SK-N-SH (cell line): ENCODE measurements at regions of chr22 and their contacts with region 1.

Region 1: GRCh38 chr22:17171313-17172171 is 12.5 kb upstream of the HDHD5 start:
- DNase-seq: peak; percentile 96
- H3K4me3 ChIP-seq: peak overlapping the region; percentile 59 to 99
- H3K27ac ChIP-seq: peak overlapping the region; percentile 72 to 82
- H3K4me1 ChIP-seq: peaks cover 0 to 3% of the 10 kb centered on the region in 2 experiments; a peak in 1 of 4 replicates
- H3K27me3 ChIP-seq: no peaks in the 10 kb centered on the region
- CTCF ChIP-seq: peak; percentile 90
- EP300 ChIP-seq: no peak
- RAD21 ChIP-seq: peak; percentile 55

Region 2: DNA sequence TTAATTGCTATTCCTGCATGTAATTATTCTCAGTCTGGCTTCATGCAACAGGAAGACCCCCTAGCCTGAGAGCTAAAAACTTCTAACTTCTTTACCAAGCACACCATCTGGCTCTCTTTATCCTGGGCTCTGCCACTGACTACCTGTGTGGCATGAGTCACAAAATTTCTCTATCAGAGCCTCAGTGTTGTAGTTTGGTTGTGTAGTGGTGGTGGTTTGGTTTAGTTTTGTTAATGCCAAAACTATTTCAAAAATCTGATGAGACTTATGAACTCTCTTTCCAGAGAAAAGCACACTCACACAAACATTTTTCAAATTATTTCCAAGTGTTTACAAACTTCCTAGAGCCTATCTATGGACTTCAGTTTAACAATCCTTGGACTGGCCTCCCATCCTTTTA is 94.3 kb before region 1 on chr22:
- CTCF ChIA-PET with region 1: interaction called, 44 read pairs
- POLR2A ChIA-PET with region 1: interaction called, 3 read pairs
- DNase-seq: no peak
- H3K4me3 ChIP-seq: no peak overlapping the region
- H3K27ac ChIP-seq: peak overlapping the region in 1 of 2 experiments; percentile 45; a peak in 1 of 4 replicates
- H3K4me1 ChIP-seq: no peaks in the 10 kb centered on the region
- H3K27me3 ChIP-seq: peaks cover 5% of the 10 kb centered on the region
- CTCF ChIP-seq: no peak
- EP300 ChIP-seq: peak in 1 of 2 experiments; percentile 20; a peak in 1 of 4 replicates
- RAD21 ChIP-seq: no peak

Region 3: GRCh38 chr22:17112486-17113042 is 59.0 kb before region 1 on chr22:
- CTCF ChIA-PET with region 1: interaction called, 15 read pairs
- POLR2A ChIA-PET with region 1: no interaction called
- DNase-seq: no peak
- H3K4me3 ChIP-seq: no peak overlapping the region
- H3K27ac ChIP-seq: no peak overlapping the region
- H3K4me1 ChIP-seq: no peaks in the 10 kb centered on the region
- H3K27me3 ChIP-seq: no peaks in the 10 kb centered on the region
- CTCF ChIP-seq: no peak
- EP300 ChIP-seq: no peak
- RAD21 ChIP-seq: no peak

Region 4: GRCh38 chr22:17143826-17144225 is 27.7 kb before region 1 on chr22:
- CTCF ChIA-PET with region 1: interaction called, 21 read pairs
- POLR2A ChIA-PET with region 1: no interaction called
- DNase-seq: no peak
- H3K4me3 ChIP-seq: no peak overlapping the region
- H3K27ac ChIP-seq: no peak overlapping the region
- H3K4me1 ChIP-seq: no peaks in the 10 kb centered on the region; a peak in 1 of 4 replicates
- H3K27me3 ChIP-seq: no peaks in the 10 kb centered on the region
- CTCF ChIP-seq: no peak
- EP300 ChIP-seq: no peak
- RAD21 ChIP-seq: no peak

Region 5: GRCh38 chr22:17199003-17199731 is 27.6 kb after region 1 on chr22:
- CTCF ChIA-PET with region 1: interaction called, 68 read pairs
- POLR2A ChIA-PET with region 1: no interaction called
- DNase-seq: peak; percentile 77
- H3K4me3 ChIP-seq: 0 out of 4 replicates have a peak overlapping the region, but pooled peaks of 1 of the 2 experiments have one; percentile 23
- H3K27ac ChIP-seq: no peak overlapping the region
- H3K4me1 ChIP-seq: peaks cover 0 to 5% of the 10 kb centered on the region in 2 experiments; a peak in 1 of 4 replicates
- H3K27me3 ChIP-seq: peaks cover 23% of the 10 kb centered on the region
- CTCF ChIP-seq: no peak
- EP300 ChIP-seq: peak in 1 of 2 experiments; percentile 44; a peak in 1 of 4 replicates
- RAD21 ChIP-seq: no peak

Region 6: GRCh38 chr22:17300926-17301325 is 129.4 kb after region 1 on chr22:
- CTCF ChIA-PET with region 1: no interaction called
- POLR2A ChIA-PET with region 1: no interaction called
- DNase-seq: no peak
- H3K4me3 ChIP-seq: no peak overlapping the region
- H3K27ac ChIP-seq: no peak overlapping the region
- H3K4me1 ChIP-seq: no peaks in the 10 kb centered on the region
- H3K27me3 ChIP-seq: peaks cover 15% of the 10 kb centered on the region; the same call in 1 of the 2 replicates
- CTCF ChIP-seq: no peak
- EP300 ChIP-seq: no peak
- RAD21 ChIP-seq: no peak

Region 7: GRCh38 chr22:17501679-17502285 is 330.2 kb after region 1 on chr22:
- CTCF ChIA-PET with region 1: interaction called, 79 read pairs
- POLR2A ChIA-PET with region 1: interaction called, 5 read pairs
- DNase-seq: peak; percentile 69
- H3K4me3 ChIP-seq: no peak overlapping the region; a peak in 1 of 4 replicates
- H3K27ac ChIP-seq: no peak overlapping the region
- H3K4me1 ChIP-seq: no peaks in the 10 kb centered on the region
- H3K27me3 ChIP-seq: peaks cover 61% of the 10 kb centered on the region
- CTCF ChIP-seq: peak; percentile 79
- EP300 ChIP-seq: no peak
- RAD21 ChIP-seq: peak; percentile 87